Right cardiac atrium (tissue), 5 donors: ENCODE measurements at regions of chr7 and their contacts with region 1.

Region 1: GRCh38 chr7:105652359-105652993 is 71.2 kb upstream of the EFCAB10 start:
- DNase-seq: peak; percentile 81 to 92 (median 90)
- ATAC-seq: peak; percentile 91 to 94
- H3K4me3 ChIP-seq: no peak overlapping the region
- H3K27ac ChIP-seq: no peak overlapping the region
- H3K4me1 ChIP-seq: peaks cover 16% of the 10 kb centered on the region
- H3K27me3 ChIP-seq: no peaks in the 10 kb centered on the region

Region 2: DNA sequence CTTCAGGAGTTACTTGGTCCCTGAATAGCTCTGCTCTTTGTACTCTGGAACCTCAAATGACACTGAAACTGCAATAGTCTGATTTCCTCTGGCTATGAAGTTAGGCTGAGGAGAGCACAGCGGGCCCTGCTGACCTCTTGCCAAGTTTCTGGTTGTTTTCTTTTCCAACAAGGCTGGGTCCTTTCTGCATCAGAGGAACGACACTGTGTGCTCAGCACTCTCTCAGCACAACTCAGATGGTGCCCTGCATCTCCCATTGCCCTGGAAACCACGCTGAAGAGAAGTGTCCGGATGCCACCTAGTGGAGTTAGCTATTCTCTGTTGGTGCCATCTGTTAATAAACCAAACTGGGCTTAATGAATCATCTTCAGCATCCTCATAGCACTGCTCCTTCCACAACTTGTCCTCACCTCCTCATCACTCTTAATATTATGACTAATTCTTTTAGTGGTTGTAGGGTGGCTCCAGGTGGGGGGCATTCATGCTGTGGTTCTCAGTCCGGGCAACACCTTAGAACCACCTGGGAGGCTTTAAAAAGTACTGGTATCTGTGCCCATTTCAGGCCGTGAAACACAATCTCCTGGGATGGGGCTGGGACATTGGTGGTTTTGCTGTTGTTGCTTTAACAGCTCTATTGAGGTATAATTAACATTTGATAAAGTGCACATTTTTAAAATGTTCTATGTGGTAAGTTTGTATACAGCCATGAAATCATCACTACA is 63.0 kb before region 1 on chr7:
- intact Hi-C with region 1: no loop called
- DNase-seq: peak; percentile 52 to 68 (median 62)
- ATAC-seq: peak; percentile 87 to 89
- H3K4me3 ChIP-seq: no peak overlapping the region
- H3K27ac ChIP-seq: no peak overlapping the region
- H3K4me1 ChIP-seq: no peaks in the 10 kb centered on the region
- H3K27me3 ChIP-seq: no peaks in the 10 kb centered on the region

Region 3: GRCh38 chr7:105743351-105744090 is 91.0 kb after region 1 on chr7:
- intact Hi-C with region 1: loop called in 3 of 4 experiments (anchors 10 kb)
- DNase-seq: no peak
- ATAC-seq: peak in 1 of 2 donors; percentile 44
- H3K4me3 ChIP-seq: no peak overlapping the region
- H3K27ac ChIP-seq: no peak overlapping the region
- H3K4me1 ChIP-seq: no peaks in the 10 kb centered on the region
- H3K27me3 ChIP-seq: no peaks in the 10 kb centered on the region

Region 4: GRCh38 chr7:105752671-105753275 is 100.3 kb after region 1 on chr7:
- intact Hi-C with region 1: loop called (anchors 5 to 10 kb)
- DNase-seq: no peak
- ATAC-seq: no peak
- H3K4me3 ChIP-seq: no peak overlapping the region
- H3K27ac ChIP-seq: no peak overlapping the region
- H3K4me1 ChIP-seq: no peaks in the 10 kb centered on the region
- H3K27me3 ChIP-seq: no peaks in the 10 kb centered on the region

Region 5: GRCh38 chr7:105876091-105876963 is 223.9 kb after region 1 on chr7 and contains the start of gene ATXN7L1:
- intact Hi-C with region 1: no loop called
- DNase-seq: peak; percentile 95 to 98 (median 97)
- ATAC-seq: peak; percentile 97 to 98
- H3K4me3 ChIP-seq: peak within 1 kb of the TSS; percentile 98
- H3K27ac ChIP-seq: peak within 1 kb of the TSS; percentile 76
- H3K4me1 ChIP-seq: peaks cover 3% of the 10 kb centered on the region
- H3K27me3 ChIP-seq: no peaks in the 10 kb centered on the region
- total RNA-seq, gene ATXN7L1: 3.9 to 6.5 (median 5.0) TPM

Region 6: GRCh38 chr7:106009403-106010226 is 357.1 kb after region 1 on chr7:
- intact Hi-C with region 1: loop called in 3 of 4 experiments (anchors 10 kb)
- DNase-seq: peak; percentile 77 to 90 (median 89)
- ATAC-seq: peak; percentile 94 to 98
- H3K4me3 ChIP-seq: no peak overlapping the region
- H3K27ac ChIP-seq: no peak overlapping the region
- H3K4me1 ChIP-seq: no peaks in the 10 kb centered on the region
- H3K27me3 ChIP-seq: no peaks in the 10 kb centered on the region

Region 7: DNA sequence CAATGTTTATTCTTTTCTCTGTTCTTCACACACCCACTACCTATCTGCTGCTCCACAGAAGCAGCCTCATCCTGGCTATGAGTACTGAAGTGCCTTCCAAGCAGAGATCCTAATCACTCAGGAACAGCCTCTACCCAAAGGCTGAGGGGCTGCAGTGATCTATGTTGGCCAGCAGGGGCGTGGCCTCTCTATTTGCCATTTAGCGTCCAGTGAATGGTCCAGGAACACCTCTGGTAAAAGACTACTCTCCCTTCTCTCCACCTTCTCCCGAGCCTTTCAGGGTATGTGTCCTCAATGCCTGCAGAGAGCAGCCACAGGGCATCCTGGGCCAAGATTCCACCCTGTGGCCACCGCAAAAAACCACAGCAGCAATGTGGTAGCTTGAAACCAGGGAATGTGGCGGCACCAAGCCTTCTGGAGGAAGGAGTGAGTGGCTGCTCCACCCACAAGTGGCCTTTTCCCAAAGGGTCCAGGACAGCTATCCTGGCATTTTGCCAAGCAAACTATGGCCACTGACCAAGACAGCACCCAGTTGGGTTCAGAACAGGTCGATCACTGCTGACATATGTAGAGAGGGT is 388.8 kb after region 1 on chr7:
- intact Hi-C with region 1: loop called in 3 of 4 experiments (anchors 5 kb)
- DNase-seq: no peak
- ATAC-seq: no peak
- H3K4me3 ChIP-seq: no peak overlapping the region
- H3K27ac ChIP-seq: no peak overlapping the region
- H3K4me1 ChIP-seq: no peaks in the 10 kb centered on the region
- H3K27me3 ChIP-seq: no peaks in the 10 kb centered on the region